Activated T-helper 1 cell treated with anti-CD3 and anti-CD28 coated beads, Interleukin-12 subunit alpha, Interleukin-12 subunit beta, Interleukin-2, Interleukin-4 antibody, amounts not matched to agents 30 ng/mL and 10 ng/mL and 1 ng/mL, durations not matched to agents 14 hours and 24 hours and 36 hours (primary cell): ENCODE measurements at regions of chr17 and their contacts with region 1.

Region 1: DNA sequence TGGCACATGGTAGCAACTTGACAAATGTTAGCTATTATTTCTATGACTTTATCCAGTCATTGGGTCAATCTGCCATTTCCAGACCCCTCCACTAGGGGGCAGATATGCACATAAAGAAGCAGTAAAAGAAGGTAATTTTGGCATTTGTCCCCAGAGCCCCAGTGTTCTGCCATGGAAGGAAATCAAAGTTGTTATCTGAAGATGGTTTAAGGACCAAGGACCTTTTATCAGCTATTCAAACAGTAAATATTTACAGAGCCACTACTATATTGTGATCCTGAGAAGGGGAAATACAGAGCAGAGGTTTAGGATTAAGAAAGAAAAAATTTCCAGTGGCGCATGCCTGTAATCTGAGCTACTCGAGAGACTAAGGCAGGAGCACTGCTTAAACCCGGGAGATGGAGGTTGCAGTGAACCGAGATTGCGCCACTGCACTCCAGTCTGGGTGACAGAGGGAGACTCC is 20.0 kb downstream of the TRAF4 start:
- DNase-seq: peak; percentile 63
- H3K4me3 Mint-ChIP-seq: no peak overlapping the region
- H3K27ac Mint-ChIP-seq: peak overlapping the region; percentile 53
- H3K4me1 Mint-ChIP-seq: peaks cover 26% of the 10 kb centered on the region
- H3K27me3 Mint-ChIP-seq: no peaks in the 10 kb centered on the region

Region 2: DNA sequence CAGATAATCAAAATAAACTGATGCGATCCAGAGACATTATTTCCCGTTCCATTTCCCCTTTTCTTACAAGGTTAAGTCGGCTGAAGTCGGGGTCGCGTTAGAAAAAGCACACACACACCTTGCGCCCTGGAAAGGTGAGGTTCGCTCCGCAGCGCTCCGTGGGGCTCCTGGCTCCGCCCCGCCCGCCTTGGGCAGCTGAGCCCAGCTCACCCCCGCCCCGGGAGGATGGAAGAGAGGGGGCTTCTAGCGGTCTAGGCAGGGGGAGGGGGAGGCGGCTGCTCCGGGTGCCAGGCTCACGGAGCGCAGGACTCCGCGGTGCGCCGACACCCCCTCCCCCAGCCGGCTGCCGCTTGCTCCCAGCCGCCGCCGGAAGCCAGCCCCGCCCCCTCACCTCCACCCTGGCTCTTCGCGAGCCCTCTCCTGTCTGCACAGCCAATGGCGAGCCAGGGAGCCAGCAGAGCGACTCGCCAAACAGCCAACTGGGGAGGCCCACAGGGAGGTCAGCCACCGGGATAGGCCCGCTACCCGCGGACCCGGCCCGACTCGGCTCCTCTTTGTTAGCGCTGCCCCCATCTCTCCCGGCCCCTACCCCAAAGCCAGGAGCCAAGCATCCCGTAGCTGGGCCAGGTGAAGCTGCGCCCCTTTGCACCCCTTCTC is 48.4 kb after region 1 on chr17:
- intact Hi-C with region 1: loop called (anchors 1 kb)
- DNase-seq: peak; percentile 95
- H3K4me3 Mint-ChIP-seq: peak overlapping the region; percentile 91
- H3K27ac Mint-ChIP-seq: peak overlapping the region; percentile 97
- H3K4me1 Mint-ChIP-seq: peaks cover 43% of the 10 kb centered on the region
- H3K27me3 Mint-ChIP-seq: no peaks in the 10 kb centered on the region

Region 3: DNA sequence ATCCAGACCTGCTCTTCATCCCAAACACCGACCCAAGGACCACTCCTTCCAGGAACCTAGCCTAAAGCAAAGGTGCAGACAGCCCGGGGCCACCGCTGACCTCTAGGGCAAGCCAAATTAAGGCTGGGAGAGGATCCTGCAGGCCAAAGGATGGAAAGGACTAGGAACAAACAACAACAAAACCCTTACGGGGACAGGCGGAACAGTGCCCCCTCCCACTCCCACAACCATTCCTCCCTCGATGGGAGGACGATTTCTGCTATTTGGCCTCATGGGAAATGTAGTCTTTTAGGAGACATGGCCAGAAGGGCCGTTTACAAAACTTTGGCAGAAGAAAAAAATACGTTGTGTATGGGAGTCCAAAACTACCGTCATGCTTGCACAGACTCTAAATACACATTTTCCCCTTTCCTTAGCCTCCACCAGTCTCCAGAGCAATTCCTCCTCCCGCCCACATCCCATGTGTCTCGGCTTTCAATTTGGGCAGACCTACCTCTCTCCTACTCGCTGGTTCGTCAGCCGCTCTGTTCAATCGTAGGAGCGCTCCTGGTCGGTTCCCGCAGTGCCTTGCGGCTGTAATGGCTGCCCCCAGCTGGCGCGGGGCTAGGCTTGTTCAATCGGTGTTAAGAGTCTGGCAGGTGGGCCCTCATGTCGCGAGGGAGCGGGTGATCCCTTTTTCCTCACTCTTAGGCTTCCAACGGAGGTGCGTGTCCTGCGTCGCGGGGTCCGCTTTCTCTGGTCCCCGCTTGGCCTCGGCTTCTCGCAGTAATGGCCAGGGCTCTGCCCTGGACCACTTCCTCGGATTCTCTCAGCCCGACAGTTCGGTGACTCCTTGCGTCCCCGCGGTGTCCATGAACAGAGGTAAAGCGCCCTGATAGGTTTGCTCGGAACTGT is 90.9 kb after region 1 on chr17 and contains the start of gene ERAL1:
- intact Hi-C with region 1: loop called (anchors 1 kb)
- DNase-seq: peak; percentile 82
- H3K4me3 Mint-ChIP-seq: peak within 1 kb of the TSS; percentile 85
- H3K27ac Mint-ChIP-seq: peak within 1 kb of the TSS; percentile 88
- H3K4me1 Mint-ChIP-seq: peaks cover 14% of the 10 kb centered on the region
- H3K27me3 Mint-ChIP-seq: no peaks in the 10 kb centered on the region
- total RNA-seq, gene ERAL1: 60.4 and 61.5 TPM in 2 replicates

Region 4: DNA sequence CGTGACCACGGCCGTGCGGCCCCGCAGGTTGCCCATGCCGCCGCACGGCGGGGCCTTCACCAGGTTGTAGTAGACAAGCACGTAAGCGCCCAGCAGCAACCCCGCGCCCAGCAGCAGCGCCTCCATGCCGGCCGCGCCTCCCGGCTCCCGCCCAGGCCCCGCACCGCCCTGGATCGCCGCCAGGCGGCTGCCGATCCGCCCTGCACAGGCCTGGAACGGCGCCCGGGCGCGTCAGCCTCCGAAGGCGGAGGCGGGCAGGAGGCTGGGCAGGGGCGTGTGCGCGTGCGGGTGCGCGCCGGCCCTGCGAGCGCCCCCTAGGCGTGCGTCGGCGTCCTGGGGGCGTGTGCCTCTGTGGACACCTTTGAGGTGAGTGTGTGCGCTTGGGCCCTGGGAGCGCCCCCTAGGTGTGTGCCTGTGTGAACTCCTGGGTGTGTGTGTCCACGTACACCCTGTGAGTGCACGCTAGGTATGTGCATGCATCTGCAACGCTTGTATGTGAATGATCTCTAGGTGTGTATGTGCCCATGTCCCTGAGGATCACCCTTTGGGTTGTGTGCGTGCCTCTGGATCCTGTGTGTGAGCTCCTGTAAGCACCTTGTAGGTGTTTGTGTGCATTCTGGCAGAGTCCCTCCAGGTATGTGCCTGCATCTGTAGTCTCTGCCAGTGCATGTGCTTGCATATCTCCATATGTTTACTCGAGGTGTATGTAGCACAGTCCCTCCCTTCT is 139.1 kb after region 1 on chr17 and contains the start of gene DHRS13:
- intact Hi-C with region 1: loop called (anchors 1 kb)
- DNase-seq: peak; percentile 93
- H3K4me3 Mint-ChIP-seq: peak within 1 kb of the TSS; percentile 91
- H3K27ac Mint-ChIP-seq: peak within 1 kb of the TSS; percentile 79
- H3K4me1 Mint-ChIP-seq: peaks cover 39% of the 10 kb centered on the region
- H3K27me3 Mint-ChIP-seq: no peaks in the 10 kb centered on the region
- total RNA-seq, gene DHRS13: 34.6 and 34.9 TPM in 2 replicates

Region 5: DNA sequence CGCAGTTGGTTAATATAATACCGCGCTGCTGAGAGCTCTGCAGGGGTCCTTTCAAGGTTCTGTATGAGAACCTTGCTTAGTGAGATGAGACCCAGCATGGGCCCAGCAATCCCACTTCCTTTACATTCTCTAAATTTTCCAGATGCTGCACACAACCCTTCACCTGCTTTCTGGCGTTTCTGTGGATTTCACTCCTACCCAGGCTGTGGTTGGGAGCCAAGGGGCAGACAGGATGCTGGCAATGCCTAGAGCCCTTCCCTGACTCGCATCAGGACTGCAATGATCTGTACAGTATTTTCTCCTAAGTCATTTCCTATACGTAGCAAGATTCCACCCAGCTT is 269.0 kb after region 1 on chr17:
- intact Hi-C with region 1: no loop called
- DNase-seq: no peak
- H3K4me3 Mint-ChIP-seq: no peak overlapping the region
- H3K27ac Mint-ChIP-seq: no peak overlapping the region
- H3K4me1 Mint-ChIP-seq: no peaks in the 10 kb centered on the region
- H3K27me3 Mint-ChIP-seq: peaks cover 28% of the 10 kb centered on the region

Region 6: GRCh38 chr17:29111816-29112499 is 348.1 kb after region 1 on chr17:
- intact Hi-C with region 1: loop called (anchors 10 kb)
- DNase-seq: peak; percentile 41
- H3K4me3 Mint-ChIP-seq: no peak overlapping the region
- H3K27ac Mint-ChIP-seq: no peak overlapping the region
- H3K4me1 Mint-ChIP-seq: no peaks in the 10 kb centered on the region
- H3K27me3 Mint-ChIP-seq: no peaks in the 10 kb centered on the region